Left ventricle myocardium superior (tissue), 1 donor: ENCODE measurements at regions of chr11 and their contacts with region 1.

Region 1: DNA sequence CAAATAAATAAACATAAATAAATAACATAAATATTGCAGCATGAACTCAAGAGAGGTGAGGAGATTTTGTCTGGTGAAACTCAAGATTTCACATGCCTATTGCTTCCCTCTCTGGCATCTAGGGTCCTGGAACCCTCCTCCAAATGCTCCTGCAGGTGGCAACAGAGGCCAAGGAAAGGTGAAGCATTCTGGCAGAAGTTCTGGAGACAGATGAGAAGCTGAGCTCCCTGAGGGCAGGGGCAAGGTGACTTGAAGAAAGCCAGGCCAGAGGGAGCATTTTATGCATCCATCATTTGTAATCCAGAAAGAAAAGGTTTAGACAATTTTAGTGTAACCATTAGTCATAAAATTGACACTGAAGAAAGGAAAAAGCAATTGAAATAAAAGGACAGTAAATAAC is 64.9 kb downstream of the ENDOD1 start:
- DNase-seq: no peak
- ATAC-seq: no peak

Region 2: DNA sequence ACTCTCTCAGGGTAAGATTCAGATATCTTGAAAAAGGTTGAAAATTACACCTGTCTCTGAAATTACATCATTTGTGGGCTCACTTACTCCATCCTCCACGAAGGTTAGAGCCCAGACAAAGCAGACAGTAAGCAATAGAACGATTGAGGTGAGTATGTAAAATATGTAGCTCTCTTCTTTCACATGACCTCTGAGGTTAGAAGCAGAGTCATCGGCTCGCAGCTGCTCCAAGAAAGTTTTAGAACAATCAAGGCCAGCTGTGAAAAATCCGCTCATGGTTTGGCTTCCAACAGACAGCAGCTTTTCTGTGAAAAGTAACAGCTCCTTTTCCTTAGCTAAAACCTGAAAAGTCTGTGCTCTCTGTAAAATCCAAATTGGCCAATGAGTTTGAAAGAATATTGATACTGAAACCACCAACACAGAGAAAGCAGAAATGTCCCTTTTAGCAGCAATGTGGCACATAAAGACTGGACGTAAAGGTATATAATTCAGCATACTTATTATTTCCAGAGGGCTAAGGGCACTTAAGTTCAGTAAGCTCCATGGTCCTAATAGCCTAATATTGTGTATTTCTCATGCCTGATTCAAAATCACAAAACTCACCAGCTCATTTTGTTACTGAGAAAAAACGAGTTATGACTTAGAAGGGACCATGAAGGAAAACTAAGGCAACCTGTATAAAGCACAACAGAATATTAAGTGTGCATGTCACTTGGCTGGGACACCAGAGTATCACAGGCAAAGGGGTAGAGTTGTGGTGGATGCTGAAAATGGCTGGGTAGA is 556.8 kb after region 1 on chr11:
- intact Hi-C with region 1: loop called (anchors 2 kb)
- DNase-seq: no peak
- ATAC-seq: no peak

Region 3: DNA sequence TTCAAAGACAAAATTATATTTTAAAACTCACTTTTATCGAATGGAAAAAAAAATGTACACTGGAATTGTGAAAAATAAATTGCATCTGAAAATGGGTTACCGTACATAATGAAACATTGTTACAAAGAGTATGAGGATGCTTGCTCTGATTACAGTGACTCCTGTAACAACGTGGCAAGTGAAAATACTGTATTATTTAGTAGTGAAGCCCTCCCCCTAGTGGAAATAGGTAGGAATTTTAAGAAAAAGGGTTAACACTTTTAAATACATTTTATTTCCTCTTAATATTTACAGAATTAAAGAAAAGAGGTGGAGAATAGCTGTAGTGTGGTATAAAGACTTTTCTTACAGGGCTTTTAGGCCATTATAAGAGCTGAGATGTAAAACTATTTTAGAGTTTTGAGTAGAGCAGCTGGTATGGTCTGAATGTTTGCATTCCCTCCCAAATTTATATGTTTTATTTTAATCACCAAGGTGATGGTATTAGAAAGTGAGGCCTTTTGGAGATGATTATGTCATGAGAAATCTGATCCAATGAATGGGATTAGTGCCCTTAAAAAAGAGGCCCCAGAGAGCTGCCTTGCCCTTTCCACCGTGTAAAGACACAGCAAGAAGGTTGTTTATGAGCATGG is 609.9 kb after region 1 on chr11:
- intact Hi-C with region 1: loop called (anchors 2 kb)
- DNase-seq: no peak
- ATAC-seq: peak; percentile 51